Ascending aorta (tissue), 2 donors: ENCODE measurements at regions of chr1 and their contacts with region 1.

Region 1: GRCh38 chr1:203643213-203644045 is 16.8 kb downstream of the ATP2B4 start:
- DNase-seq: no peak
- H3K4me3 ChIP-seq: no peak overlapping the region
- H3K27ac ChIP-seq: peak overlapping the region; percentile 84 to 86
- H3K4me1 ChIP-seq: peaks cover 8 to 40% of the 10 kb centered on the region in 2 donors
- H3K27me3 ChIP-seq: no peaks in the 10 kb centered on the region
- CTCF ChIP-seq: no peak

Region 2: DNA sequence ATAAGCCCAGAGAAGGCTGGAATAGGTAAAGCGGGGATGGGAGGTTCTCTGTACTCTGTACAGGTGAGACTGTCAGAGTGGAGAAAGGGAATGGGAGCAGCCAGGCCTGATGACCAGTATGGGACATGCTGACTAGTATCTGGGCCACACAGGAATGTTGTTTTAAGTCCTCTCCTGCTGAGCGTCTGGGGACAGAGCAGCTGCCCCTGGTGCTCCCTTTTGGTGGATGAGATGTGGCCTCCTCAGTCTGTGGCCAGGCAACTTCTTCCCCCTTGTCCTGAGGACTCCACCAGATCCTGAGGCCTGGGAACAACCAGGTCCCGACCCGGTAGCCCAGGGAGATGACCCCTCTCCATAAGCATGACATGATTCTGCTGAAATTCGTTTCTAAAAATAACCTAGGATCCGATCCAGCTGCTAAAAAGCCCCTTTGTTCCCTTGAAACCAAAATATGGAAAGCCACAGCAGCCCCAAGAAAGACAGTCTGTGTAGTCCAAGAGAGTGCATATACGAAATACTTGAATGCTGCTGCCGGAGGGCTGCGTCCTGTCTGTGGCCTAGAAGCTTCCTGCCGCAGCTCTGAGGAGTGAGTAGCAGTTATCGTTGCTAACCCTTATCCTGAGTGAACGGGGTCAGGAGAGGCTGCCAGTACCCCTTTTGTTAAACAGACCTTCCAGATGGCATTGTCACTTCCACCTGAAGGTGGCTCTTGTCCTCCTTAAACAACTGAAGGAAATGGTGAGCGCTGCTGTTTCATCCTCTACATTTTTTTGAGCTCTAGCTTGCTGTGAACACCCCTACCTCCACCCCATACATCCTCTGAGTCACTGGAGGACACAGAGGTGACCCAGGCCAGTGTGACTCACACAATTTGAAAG is 30.4 kb after region 1 on chr1:
- intact Hi-C with region 1: loop called (anchors 2 kb)
- DNase-seq: peak; percentile 49 to 89
- H3K4me3 ChIP-seq: no peak overlapping the region
- H3K27ac ChIP-seq: peak overlapping the region; percentile 82 to 93
- H3K4me1 ChIP-seq: peaks cover 15 to 56% of the 10 kb centered on the region in 2 donors
- H3K27me3 ChIP-seq: no peaks in the 10 kb centered on the region
- CTCF ChIP-seq: peak in 1 of 3 experiments; percentile 7

Region 3: GRCh38 chr1:203692565-203693470 is 49.4 kb after region 1 on chr1:
- intact Hi-C with region 1: loop called (anchors 1 kb)
- DNase-seq: peak; percentile 76 to 96
- H3K4me3 ChIP-seq: no peak overlapping the region
- H3K27ac ChIP-seq: peak overlapping the region; percentile 82 to 87
- H3K4me1 ChIP-seq: peaks cover 17 to 38% of the 10 kb centered on the region in 2 donors
- H3K27me3 ChIP-seq: no peaks in the 10 kb centered on the region
- CTCF ChIP-seq: no peak